Esophagus squamous epithelium (tissue), 5 donors: ENCODE measurements at regions of chr17 and their contacts with region 1.

Region 1: GRCh38 chr17:68539548-68540467 is 27.6 kb downstream of the PRKAR1A start:
- DNase-seq: no peak
- H3K4me3 ChIP-seq: no peak overlapping the region
- H3K27ac ChIP-seq: no peak overlapping the region
- H3K4me1 ChIP-seq: peaks cover 0 to 25% (median 4%) of the 10 kb centered on the region in 3 donors
- H3K27me3 ChIP-seq: no peaks in the 10 kb centered on the region
- CTCF ChIP-seq: peak in 5 of 6 experiments; percentile 28 to 60 (median 31)
- POLR2A ChIP-seq: no peak

Region 2: DNA sequence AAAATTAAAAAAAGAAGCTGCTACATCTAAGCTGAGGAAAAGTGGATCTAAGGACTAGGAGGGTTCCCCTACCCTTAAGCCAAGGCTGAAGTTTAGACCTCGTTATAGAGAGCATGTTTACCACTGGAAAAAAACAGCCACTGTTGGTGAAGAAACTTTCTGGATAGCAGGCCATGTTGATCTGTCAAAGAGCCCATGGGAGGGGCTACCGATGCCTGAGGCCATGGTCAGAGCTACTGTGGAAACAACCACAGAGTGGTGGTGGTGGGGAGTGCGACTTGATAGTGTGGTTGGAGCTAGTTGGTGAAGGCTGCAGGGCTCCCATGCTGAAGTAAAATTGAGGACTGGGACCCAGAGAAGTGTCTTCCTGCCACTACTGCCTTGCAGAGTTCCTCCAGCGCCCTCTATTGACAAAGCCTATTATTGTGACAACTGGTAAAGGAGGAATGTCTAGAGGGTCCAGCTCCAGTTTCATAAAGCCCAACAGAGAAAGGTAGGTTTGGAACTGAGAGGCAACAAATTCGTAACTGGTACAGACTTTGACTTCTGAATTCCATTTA is 74.0 kb after region 1 on chr17:
- intact Hi-C with region 1: loop called (anchors 5 kb)
- DNase-seq: no peak
- H3K4me3 ChIP-seq: no peak overlapping the region
- H3K27ac ChIP-seq: no peak overlapping the region
- H3K4me1 ChIP-seq: peaks cover 0 to 14% (median 5%) of the 10 kb centered on the region in 3 donors
- H3K27me3 ChIP-seq: no peaks in the 10 kb centered on the region
- CTCF ChIP-seq: peak in 5 of 6 experiments; percentile 32 to 72 (median 59)
- POLR2A ChIP-seq: no peak

Region 3: DNA sequence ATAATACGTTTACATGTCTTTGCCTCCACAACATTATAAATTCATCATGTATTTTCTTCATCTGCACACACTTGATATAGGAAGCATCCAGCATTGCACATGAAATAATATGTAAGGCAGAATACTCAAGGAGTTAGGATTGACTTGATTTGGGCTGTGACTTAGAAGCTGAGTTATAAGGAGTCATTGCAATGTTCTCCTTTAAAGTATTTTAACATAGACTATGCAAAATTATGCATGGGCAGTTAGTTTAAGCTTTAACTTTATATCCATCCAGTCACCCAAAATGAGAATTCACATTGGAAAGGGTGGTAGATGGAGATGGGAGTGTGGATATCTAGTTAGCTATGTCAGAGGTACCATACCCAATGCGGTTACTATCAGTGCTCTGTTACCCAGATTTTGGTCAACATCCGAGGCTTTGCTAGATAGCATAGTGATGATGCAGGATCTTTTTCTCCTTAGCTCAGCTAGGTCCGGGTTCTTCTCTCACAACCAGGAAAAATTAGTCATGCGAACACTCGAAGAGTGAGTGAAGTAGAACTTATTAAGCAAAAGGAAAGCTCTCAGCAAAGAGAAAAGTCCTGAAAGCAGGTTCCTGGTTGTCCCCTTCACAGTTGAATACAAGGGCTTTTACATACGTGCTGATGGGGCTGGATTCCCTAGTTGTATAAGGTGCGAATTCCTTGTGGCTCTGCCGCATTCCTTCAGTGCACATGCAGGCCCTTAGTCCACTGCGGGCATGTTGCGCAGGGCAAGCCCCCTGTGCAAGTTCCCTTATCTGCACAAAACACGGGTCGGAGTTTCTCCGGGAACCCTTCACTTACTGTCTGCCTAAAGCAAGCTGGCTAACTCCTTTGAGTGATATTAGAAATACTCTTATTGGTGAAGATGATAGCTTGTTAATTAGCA is 134.5 kb after region 1 on chr17:
- intact Hi-C with region 1: no loop called
- DNase-seq: no peak
- H3K4me3 ChIP-seq: no peak overlapping the region
- H3K27ac ChIP-seq: no peak overlapping the region
- H3K4me1 ChIP-seq: no peaks in the 10 kb centered on the region
- H3K27me3 ChIP-seq: no peaks in the 10 kb centered on the region
- CTCF ChIP-seq: no peak
- POLR2A ChIP-seq: no peak

Region 4: GRCh38 chr17:68759343-68760132 is 219.7 kb after region 1 on chr17:
- intact Hi-C with region 1: loop called (anchors 10 kb)
- DNase-seq: no peak
- H3K4me3 ChIP-seq: peak overlapping the region; percentile 16 to 62 (median 40)
- H3K27ac ChIP-seq: peak overlapping the region; percentile 74 to 81 (median 78)
- H3K4me1 ChIP-seq: peaks cover 7 to 14% (median 7%) of the 10 kb centered on the region in 3 donors
- H3K27me3 ChIP-seq: no peaks in the 10 kb centered on the region
- CTCF ChIP-seq: peak; percentile 19 to 96 (median 89)
- POLR2A ChIP-seq: no peak